Activated CD4-positive, alpha-beta memory T cell treated with anti-CD3 and anti-CD28 coated beads for 36 hours (primary cell): ENCODE measurements at regions of chr1 and their contacts with region 1.

Region 1: GRCh38 chr1:228794173-228794572 is 58.9 kb downstream of the RHOU start:
- DNase-seq: peak; percentile 52
- H3K4me3 Mint-ChIP-seq: no peak overlapping the region
- H3K27ac Mint-ChIP-seq: no peak overlapping the region
- H3K4me1 Mint-ChIP-seq: peaks cover 9% of the 10 kb centered on the region
- H3K27me3 Mint-ChIP-seq: no peaks in the 10 kb centered on the region

Region 2: GRCh38 chr1:228751360-228752113 is 42.6 kb before region 1 on chr1:
- CTCF ChIA-PET with region 1: interaction called, 5 read pairs
- POLR2A ChIA-PET with region 1: interaction called, 5 read pairs
- intact Hi-C with region 1: loop called (anchors 1 kb)
- DNase-seq: peak; percentile 30
- H3K4me3 Mint-ChIP-seq: no peak overlapping the region
- H3K27ac Mint-ChIP-seq: no peak overlapping the region
- H3K4me1 Mint-ChIP-seq: peaks cover 12% of the 10 kb centered on the region
- H3K27me3 Mint-ChIP-seq: peaks cover 13% of the 10 kb centered on the region

Region 3: DNA sequence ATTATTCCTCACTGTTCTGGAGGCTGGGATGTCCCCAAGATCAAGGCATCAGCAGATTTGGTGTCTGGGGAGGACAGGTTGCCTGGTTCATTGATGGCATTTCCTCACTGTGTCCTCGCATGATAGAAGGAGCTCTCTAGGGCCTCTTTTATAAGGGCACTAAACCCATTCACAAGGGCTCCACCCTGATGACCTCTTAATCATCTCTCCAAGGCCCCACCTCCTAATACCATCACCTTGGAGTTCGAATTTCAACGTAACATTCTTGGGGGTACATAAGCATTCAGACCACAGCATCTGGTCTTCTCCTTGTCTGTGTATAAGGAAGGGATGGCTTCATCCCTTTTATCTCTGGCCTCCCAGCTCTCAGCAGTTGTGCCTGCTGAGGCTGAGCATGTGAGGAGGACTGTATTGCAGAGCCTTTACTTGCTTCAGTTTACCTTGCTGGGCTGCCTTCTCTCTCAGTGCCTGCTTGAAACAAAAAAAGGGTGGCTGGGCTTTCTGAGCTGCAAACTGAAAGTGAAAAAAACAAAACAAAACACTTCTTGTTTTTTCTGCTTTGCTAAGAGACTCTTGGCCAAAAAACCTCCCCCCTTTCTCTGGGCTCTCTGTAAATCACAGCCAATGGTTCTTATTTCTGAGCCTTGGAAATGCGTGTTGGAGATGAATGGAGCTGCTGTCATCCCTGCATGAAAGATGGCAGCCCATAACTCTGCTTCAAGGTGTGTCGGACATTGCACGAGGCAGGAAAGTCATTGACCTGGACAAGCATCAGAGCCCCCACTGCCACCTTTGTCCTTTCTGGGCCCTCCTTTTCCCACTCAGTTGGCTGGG is 16.9 kb after region 1 on chr1:
- CTCF ChIA-PET with region 1: no interaction called
- POLR2A ChIA-PET with region 1: no interaction called
- intact Hi-C with region 1: loop called (anchors 2 kb)
- DNase-seq: no peak
- H3K4me3 Mint-ChIP-seq: no peak overlapping the region
- H3K27ac Mint-ChIP-seq: no peak overlapping the region
- H3K4me1 Mint-ChIP-seq: peaks cover 34% of the 10 kb centered on the region
- H3K27me3 Mint-ChIP-seq: no peaks in the 10 kb centered on the region

Region 4: GRCh38 chr1:228860911-228861831 is 67.0 kb after region 1 on chr1:
- CTCF ChIA-PET with region 1: interaction called, 5 read pairs
- POLR2A ChIA-PET with region 1: interaction called, 4 read pairs
- intact Hi-C with region 1: loop called (anchors 1 kb)
- DNase-seq: peak; percentile 71
- H3K4me3 Mint-ChIP-seq: no peak overlapping the region
- H3K27ac Mint-ChIP-seq: no peak overlapping the region
- H3K4me1 Mint-ChIP-seq: peaks cover 34% of the 10 kb centered on the region
- H3K27me3 Mint-ChIP-seq: peaks cover 7% of the 10 kb centered on the region

Region 5: GRCh38 chr1:229127301-229127700 is 333.1 kb after region 1 on chr1:
- CTCF ChIA-PET with region 1: no interaction called
- POLR2A ChIA-PET with region 1: no interaction called
- intact Hi-C with region 1: loop called (anchors 5 kb)
- DNase-seq: peak; percentile 63
- H3K4me3 Mint-ChIP-seq: no peak overlapping the region
- H3K27ac Mint-ChIP-seq: no peak overlapping the region
- H3K4me1 Mint-ChIP-seq: peaks cover 46% of the 10 kb centered on the region
- H3K27me3 Mint-ChIP-seq: no peaks in the 10 kb centered on the region